Activated naive CD4-positive, alpha-beta T cell treated with anti-CD3 and anti-CD28 coated beads for 36 hours (primary cell): ENCODE measurements at regions of chr12 and their contacts with region 1.

Region 1: DNA sequence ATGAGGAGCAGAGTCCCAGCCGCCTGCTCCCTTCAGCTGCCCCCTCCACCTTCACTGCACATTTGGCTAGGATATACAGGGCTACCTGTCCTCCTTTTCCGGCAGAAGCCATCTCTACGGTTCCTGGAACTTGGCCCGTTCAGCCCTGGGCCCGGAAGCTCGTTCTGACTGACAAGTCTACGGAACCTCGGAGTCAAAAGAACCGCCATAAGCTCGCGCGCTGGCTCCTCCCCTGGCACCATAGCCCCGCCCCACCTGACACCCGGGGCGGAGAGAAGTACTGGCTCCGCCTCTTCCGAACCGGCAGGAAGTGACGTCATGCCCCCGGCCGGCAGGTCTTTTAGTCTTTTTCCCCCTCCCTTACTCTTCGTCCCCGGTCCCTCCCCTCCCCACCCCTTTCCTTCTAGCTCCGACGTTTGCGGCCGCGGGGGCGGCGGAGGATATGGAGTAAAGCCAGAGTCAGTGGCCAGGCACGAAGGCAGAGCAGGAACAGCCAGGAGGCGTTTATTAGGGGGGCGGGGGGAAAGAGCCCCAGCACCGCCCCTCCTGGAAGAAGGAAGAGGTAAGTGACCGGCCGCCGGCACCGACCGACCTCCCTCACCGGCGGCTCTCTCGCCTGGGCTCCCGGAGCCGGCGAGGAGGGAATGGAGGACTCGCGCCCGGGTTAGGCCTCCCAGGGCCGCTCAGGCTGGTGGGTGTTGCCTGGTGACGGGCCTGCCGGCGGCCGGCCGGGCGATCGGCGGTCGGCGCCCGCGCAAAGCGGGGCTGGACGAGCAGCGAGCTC is at the starts of genes DEPDC4 and SCYL2:
- DNase-seq: peak; percentile 95
- H3K4me3 Mint-ChIP-seq: peak within 1 kb of the TSS; percentile 96
- H3K27ac Mint-ChIP-seq: peak within 1 kb of the TSS; percentile 97
- H3K4me1 Mint-ChIP-seq: peaks cover 28% of the 10 kb centered on the region
- H3K27me3 Mint-ChIP-seq: no peaks in the 10 kb centered on the region
- total RNA-seq, gene DEPDC4: 3.4 to 3.6 TPM
- total RNA-seq, gene SCYL2: 19.4 to 20.7 TPM

Region 2: DNA sequence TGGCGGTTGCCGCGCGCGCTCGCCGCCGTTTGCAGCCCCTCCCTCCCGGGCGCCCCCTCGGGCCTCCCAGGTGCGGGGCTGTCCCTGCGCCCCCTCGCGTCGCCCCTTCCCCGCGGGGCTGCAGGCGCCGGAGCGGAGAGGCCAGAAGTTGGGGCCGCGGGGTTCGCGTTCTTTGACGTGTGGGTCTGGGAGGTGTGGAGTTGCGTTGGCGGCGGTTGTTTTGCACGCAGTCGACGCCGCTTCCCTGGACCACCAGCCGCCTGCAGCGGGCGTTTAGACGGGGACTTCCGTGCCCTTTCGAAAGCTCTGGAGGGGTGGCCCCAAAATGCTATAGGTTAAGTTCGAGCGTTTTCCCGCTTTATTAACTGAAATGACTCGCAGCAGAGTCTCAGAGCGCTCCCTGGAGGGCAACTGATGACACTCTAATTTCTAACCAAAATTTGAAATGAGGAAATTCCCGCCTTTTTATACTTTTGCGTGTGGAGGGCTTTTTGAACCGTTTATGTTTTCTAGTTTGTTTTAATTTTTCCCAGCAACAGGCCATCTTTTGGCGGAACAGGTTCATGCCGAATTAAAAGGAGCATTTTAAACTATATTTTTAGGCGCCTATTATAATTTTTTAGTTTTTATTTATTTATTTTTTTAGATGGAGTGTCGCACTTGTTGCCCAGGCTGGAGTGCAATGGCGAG is 1750.7 kb before region 1 on chr12:
- CTCF ChIA-PET with region 1: no interaction called
- intact Hi-C with region 1: loop called (anchors 5 kb)
- DNase-seq: peak; percentile 96
- H3K4me3 Mint-ChIP-seq: peak overlapping the region; percentile 92
- H3K27ac Mint-ChIP-seq: peak overlapping the region; percentile 99
- H3K4me1 Mint-ChIP-seq: peaks cover 37% of the 10 kb centered on the region
- H3K27me3 Mint-ChIP-seq: no peaks in the 10 kb centered on the region

Region 3: GRCh38 chr12:100142851-100143559 is 124.0 kb before region 1 on chr12 and contains the start of gene BLTP3B:
- CTCF ChIA-PET with region 1: no interaction called
- intact Hi-C with region 1: loop called (anchors 1 kb)
- DNase-seq: peak; percentile 93
- H3K4me3 Mint-ChIP-seq: peak within 1 kb of the TSS; percentile 91
- H3K27ac Mint-ChIP-seq: peak within 1 kb of the TSS; percentile 97
- H3K4me1 Mint-ChIP-seq: peaks cover 36% of the 10 kb centered on the region
- H3K27me3 Mint-ChIP-seq: no peaks in the 10 kb centered on the region
- total RNA-seq, gene BLTP3B: 27.0 to 27.2 TPM

Region 4: DNA sequence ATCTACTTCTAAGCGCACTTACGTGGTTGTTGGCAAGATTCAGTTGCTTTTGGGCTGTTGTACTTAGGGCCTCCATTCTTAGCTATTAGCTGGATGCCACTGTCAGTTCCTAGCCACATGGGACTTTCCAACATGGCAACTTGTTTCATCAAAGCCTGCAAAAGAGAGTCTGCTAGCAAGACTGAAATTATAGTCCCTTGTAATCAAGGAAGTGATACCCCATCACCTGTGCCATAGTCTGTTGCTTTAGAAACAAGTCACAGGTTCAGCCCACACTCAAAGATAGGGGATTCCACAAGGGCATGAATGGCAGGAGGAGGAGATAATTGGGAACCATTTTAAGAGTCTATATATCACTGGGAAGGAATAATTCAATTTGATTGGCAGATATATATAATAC is 62.8 kb after region 1 on chr12:
- CTCF ChIA-PET with region 1: no interaction called
- intact Hi-C with region 1: loop called (anchors 1 kb)
- DNase-seq: peak; percentile 21
- H3K4me3 Mint-ChIP-seq: no peak overlapping the region
- H3K27ac Mint-ChIP-seq: no peak overlapping the region
- H3K4me1 Mint-ChIP-seq: peaks cover 8% of the 10 kb centered on the region
- H3K27me3 Mint-ChIP-seq: no peaks in the 10 kb centered on the region

Region 5: GRCh38 chr12:100375038-100375735 is 108.2 kb after region 1 on chr12:
- CTCF ChIA-PET with region 1: no interaction called
- intact Hi-C with region 1: no loop called
- DNase-seq: no peak
- H3K4me3 Mint-ChIP-seq: no peak overlapping the region
- H3K27ac Mint-ChIP-seq: no peak overlapping the region
- H3K4me1 Mint-ChIP-seq: no peaks in the 10 kb centered on the region
- H3K27me3 Mint-ChIP-seq: peaks cover 3% of the 10 kb centered on the region

Region 6: GRCh38 chr12:100820314-100820713 is 553.3 kb after region 1 on chr12:
- CTCF ChIA-PET with region 1: no interaction called
- intact Hi-C with region 1: no loop called
- DNase-seq: no peak
- H3K4me3 Mint-ChIP-seq: no peak overlapping the region
- H3K27ac Mint-ChIP-seq: no peak overlapping the region
- H3K4me1 Mint-ChIP-seq: no peaks in the 10 kb centered on the region
- H3K27me3 Mint-ChIP-seq: peaks cover 3% of the 10 kb centered on the region

Region 7: DNA sequence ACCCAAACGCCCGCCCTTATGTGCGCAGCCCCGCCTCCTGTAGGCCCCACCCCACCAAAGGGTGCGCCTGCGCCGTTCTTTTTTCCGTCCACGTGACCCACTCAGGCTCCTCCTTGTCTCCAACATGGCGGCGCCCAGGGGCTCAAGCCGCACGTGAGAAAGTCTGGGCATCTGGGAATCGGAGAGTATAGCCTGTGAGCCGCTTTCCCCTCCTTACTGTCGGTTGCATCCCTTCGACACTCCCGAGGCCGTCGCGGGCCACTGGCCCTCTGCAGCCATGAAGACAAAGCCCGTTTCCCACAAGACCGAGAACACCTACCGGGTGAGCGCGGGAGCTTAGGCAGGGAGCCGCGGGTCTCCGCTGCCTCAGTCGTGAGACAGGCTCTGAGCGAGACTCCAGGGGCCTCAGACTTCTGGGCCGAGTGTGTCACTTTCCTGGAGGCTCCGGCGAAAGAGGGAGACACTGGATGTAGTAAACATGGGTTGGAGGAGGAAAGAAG is 1013.0 kb after region 1 on chr12 and contains the start of gene UTP20:
- CTCF ChIA-PET with region 1: no interaction called
- intact Hi-C with region 1: loop called (anchors 1 kb)
- DNase-seq: peak; percentile 96
- H3K4me3 Mint-ChIP-seq: peak within 1 kb of the TSS; percentile 94
- H3K27ac Mint-ChIP-seq: peak within 1 kb of the TSS; percentile 73
- H3K4me1 Mint-ChIP-seq: peaks cover 24% of the 10 kb centered on the region
- H3K27me3 Mint-ChIP-seq: peaks cover 6% of the 10 kb centered on the region
- total RNA-seq, gene UTP20: 15.8 to 16.8 TPM